PC-9 (cell line): ENCODE measurements at regions of chrX and their contacts with region 1.

Region 1: DNA sequence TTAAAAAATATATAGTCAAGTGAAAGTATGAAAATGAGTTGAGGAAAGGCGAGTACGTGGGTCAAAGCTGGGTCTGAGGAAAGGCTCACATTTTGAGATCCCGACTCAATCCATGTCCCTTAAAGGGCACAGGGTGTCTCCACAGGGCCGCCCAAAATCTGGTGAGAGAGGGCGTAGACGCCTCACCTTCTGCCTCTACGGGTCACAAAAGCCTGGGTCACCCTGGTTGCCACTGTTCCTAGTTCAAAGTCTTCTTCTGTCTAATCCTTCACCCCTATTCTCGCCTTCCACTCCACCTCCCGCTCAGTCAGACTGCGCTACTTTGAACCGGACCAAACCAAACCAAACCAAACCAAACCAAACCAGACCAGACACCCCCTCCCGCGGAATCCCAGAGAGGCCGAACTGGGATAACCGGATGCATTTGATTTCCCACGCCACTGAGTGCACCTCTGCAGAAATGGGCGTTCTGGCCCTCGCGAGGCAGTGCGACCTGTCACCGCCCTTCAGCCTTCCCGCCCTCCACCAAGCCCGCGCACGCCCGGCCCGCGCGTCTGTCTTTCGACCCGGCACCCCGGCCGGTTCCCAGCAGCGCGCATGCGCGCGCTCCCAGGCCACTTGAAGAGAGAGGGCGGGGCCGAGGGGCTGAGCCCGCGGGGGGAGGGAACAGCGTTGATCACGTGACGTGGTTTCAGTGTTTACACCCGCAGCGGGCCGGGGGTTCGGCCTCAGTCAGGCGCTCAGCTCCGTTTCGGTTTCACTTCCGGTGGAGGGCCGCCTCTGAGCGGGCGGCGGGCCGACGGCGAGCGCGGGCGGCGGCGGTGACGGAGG is at the start of gene FMR1:
- DNase-seq: peak; percentile 89 to 97
- H3K4me3 ChIP-seq: peak within 1 kb of the TSS; percentile 96
- H3K27ac ChIP-seq: peak within 1 kb of the TSS; percentile 76
- H3K4me1 ChIP-seq: peaks cover 27% of the 10 kb centered on the region
- H3K27me3 ChIP-seq: no peaks in the 10 kb centered on the region
- CTCF ChIP-seq: no peak
- total RNA-seq, gene FMR1: 99.5 and 99.9 TPM in 2 replicates

Region 2: GRCh38 chrX:147537172-147537571 is 374.2 kb before region 1 on chrX:
- CTCF ChIA-PET with region 1: no interaction called
- POLR2A ChIA-PET with region 1: no interaction called
- intact Hi-C with region 1: no loop called
- DNase-seq: no peak
- H3K4me3 ChIP-seq: no peak overlapping the region
- H3K27ac ChIP-seq: no peak overlapping the region
- H3K4me1 ChIP-seq: no peaks in the 10 kb centered on the region
- H3K27me3 ChIP-seq: 0 out of 2 replicates have a peak, but pooled peaks cover 5% of the 10 kb centered on the region
- CTCF ChIP-seq: no peak

Region 3: DNA sequence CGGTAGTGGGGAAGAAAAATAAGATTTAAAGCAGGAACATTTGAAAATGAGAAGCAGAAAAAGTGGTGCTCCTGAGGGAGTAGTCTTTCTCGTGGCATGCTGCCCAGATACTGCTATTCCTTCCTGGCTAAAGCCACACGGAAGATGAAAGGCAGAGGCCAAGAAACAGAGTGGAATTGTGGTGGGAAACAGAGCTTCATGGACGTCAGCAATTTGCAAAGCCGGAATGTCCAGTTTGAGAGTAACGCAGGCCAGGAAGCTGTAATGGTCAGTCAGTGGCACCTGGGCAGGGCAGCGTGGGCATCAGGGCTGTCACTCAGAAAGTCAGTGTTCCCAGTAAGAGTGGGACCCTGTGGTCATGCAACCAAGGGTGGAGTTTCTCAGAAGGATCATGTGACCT is 63.4 kb before region 1 on chrX:
- CTCF ChIA-PET with region 1: no interaction called
- POLR2A ChIA-PET with region 1: no interaction called
- intact Hi-C with region 1: loop called (anchors 5 kb)
- DNase-seq: peak; percentile 66 to 68
- H3K4me3 ChIP-seq: no peak overlapping the region
- H3K27ac ChIP-seq: no peak overlapping the region
- H3K4me1 ChIP-seq: 0 out of 2 replicates have a peak, but pooled peaks cover 5% of the 10 kb centered on the region
- H3K27me3 ChIP-seq: no peaks in the 10 kb centered on the region
- CTCF ChIP-seq: no peak

Region 4: GRCh38 chrX:147899715-147900114 is 11.7 kb before region 1 on chrX:
- CTCF ChIA-PET with region 1: no interaction called
- POLR2A ChIA-PET with region 1: no interaction called
- intact Hi-C with region 1: loop called (anchors 1 kb)
- DNase-seq: no peak
- H3K4me3 ChIP-seq: no peak overlapping the region
- H3K27ac ChIP-seq: no peak overlapping the region
- H3K4me1 ChIP-seq: peaks cover 11% of the 10 kb centered on the region; the same call in 1 of the 2 replicates
- H3K27me3 ChIP-seq: no peaks in the 10 kb centered on the region
- CTCF ChIP-seq: no peak

Region 5: DNA sequence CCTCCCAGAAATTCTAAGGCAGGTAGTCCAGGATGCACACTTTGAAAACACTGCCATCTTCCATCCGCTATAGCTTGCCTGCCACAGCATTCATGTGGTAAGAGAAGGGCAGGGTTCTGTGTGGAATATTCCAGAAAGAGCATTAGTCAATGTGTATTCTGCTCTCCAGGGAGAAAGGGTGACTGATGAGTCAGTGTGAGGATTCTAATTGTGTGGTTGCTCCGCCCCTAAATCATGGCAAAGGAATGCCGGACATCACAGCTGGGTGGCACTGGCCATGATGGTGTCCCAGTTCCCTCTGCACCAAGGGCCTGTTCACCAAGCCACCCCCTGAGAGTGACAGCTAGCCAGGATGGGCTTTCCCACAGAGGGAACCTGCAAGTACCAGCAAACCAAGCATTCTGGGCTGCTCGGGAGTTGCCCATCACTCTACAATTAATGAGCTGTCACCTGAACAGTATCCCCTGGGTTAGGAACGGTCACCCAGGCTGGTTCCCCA is 1584.2 kb after region 1 on chrX:
- CTCF ChIA-PET with region 1: no interaction called
- POLR2A ChIA-PET with region 1: no interaction called
- intact Hi-C with region 1: loop called (anchors 10 kb)
- DNase-seq: peak; percentile 85 to 96
- H3K4me3 ChIP-seq: no peak overlapping the region
- H3K27ac ChIP-seq: peak overlapping the region; percentile 86
- H3K4me1 ChIP-seq: peaks cover 80% of the 10 kb centered on the region
- H3K27me3 ChIP-seq: no peaks in the 10 kb centered on the region
- CTCF ChIP-seq: no peak